ENCODE measurements at regions of chr1 and their contacts with region 1.

Region 1: GRCh38 chr1:115595279-115596079 is 46.3 kb upstream of the VANGL1 start:
- DNase-seq: peak; percentile 43 to 71
- ATAC-seq: peak; percentile 92 to 98
- H3K4me3 ChIP-seq: no peak overlapping the region
- H3K27ac ChIP-seq: peak overlapping the region in 1 of 2 experiments; percentile 67; a peak in 3 of 6 replicates
- H3K4me1 ChIP-seq: no peaks in the 10 kb centered on the region
- CTCF ChIP-seq: peak; percentile 79
- EP300 ChIP-seq: no peak
- POLR2A ChIP-seq: no peak
- RAD21 ChIP-seq: peak; percentile 90 to 95

Region 2: GRCh38 chr1:115112496-115113375 is 482.7 kb before region 1 on chr1:
- CTCF ChIA-PET with region 1: interaction called, 12 read pairs
- POLR2A ChIA-PET with region 1: no interaction called
- DNase-seq: no peak
- ATAC-seq: peak; percentile 13 to 68; a peak in 3 of 6 replicates
- H3K4me3 ChIP-seq: no peak overlapping the region
- H3K27ac ChIP-seq: no peak overlapping the region
- H3K4me1 ChIP-seq: 0 out of 3 replicates have a peak, but pooled peaks cover 4% of the 10 kb centered on the region
- CTCF ChIP-seq: peak; percentile 69
- EP300 ChIP-seq: no peak
- POLR2A ChIP-seq: no peak
- RAD21 ChIP-seq: peak; percentile 68 to 70

Region 3: DNA sequence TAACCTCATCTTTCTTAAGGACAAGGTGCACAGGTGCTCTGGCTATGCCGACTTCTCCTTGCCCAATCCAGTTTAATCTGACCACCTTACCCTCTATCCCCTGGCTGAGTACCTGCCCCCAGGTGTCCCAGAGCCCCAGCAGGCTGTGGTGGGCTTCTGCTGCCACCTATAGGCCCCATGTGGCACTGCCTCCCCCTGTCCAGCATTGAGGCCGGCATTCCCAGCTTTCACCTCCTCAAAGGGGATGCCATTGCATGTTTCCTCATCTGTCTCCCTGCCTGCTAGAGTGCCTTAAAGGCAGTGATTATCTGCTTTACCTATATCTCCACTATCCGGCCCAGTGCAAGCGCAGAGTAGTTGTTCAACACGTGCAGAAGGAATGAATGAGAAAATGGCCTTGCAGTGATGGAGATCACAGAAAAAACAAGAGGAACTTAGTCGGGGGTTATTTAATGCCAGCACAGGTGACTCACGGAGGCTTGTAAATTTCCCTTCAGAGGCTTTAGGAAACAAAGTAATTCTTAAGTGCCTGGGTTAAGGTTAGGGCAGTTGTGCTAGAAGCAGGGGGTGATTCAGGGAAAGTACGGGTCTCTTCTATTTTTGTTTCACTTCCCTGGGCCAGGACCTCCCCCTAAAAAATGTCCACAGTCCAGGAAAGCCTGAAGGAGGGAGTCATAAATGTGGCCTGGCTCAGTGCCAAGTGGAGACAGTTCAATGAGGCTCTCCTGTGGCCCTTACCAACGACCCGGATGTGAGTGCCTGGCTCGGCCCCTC is 125.6 kb before region 1 on chr1:
- CTCF ChIA-PET with region 1: interaction called, 12 read pairs
- POLR2A ChIA-PET with region 1: no interaction called
- DNase-seq: peak; percentile 41 to 43
- ATAC-seq: peak; percentile 75 to 90
- H3K4me3 ChIP-seq: no peak overlapping the region
- H3K27ac ChIP-seq: peak overlapping the region; percentile 33 to 72; a peak in 2 of 6 replicates
- H3K4me1 ChIP-seq: peaks cover 8% of the 10 kb centered on the region
- CTCF ChIP-seq: peak; percentile 69
- EP300 ChIP-seq: no peak
- POLR2A ChIP-seq: no peak
- RAD21 ChIP-seq: peak; percentile 88 to 89

Region 4: GRCh38 chr1:115546846-115547245 is 48.6 kb before region 1 on chr1:
- CTCF ChIA-PET with region 1: interaction called, 17 read pairs
- POLR2A ChIA-PET with region 1: no interaction called
- DNase-seq: no peak
- ATAC-seq: no peak
- H3K4me3 ChIP-seq: no peak overlapping the region
- H3K27ac ChIP-seq: peak overlapping the region in 1 of 2 experiments; percentile 83; a peak in 3 of 6 replicates
- H3K4me1 ChIP-seq: peaks cover 19% of the 10 kb centered on the region
- CTCF ChIP-seq: no peak
- EP300 ChIP-seq: no peak
- POLR2A ChIP-seq: no peak
- RAD21 ChIP-seq: no peak

Region 5: DNA sequence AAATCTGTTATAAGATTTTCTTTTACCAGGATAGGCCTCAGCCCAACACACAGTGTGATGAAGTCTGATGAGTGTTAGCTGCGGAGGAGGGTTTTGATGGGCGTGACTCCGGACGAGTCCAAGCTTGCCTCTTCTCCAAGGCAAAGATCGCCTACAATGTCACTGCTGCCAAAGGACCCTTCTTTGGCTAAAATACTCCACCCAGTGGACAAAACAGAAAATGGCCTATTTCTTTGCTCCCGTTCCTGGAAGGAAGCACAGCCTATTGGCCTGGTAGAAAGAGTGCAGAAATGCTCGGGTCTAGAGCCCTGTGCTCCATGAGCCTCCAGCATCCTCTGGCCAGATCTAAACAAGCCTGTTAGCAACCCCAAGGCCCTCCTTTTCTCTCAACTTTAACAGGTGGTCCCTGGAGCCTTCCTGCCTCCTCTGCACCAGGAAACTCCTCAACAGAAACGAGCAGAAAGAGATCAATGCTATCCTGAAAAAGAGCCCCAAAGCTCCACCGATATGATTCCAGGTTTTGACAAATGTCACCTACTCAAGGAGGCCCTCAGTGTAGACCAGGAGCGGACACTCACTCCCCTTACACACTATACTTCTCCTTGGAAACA is 176.5 kb after region 1 on chr1:
- CTCF ChIA-PET with region 1: interaction called, 10 read pairs
- POLR2A ChIA-PET with region 1: no interaction called
- DNase-seq: peak; percentile 38 to 75
- ATAC-seq: peak; percentile 99
- H3K4me3 ChIP-seq: 0 out of 3 replicates have a peak overlapping the region, but pooled peaks have one; percentile 27
- H3K27ac ChIP-seq: peak overlapping the region; percentile 59 to 79; a peak in 5 of 6 replicates
- H3K4me1 ChIP-seq: peaks cover 4% of the 10 kb centered on the region; the same call in 1 of the 3 replicates
- CTCF ChIP-seq: peak; percentile 59
- EP300 ChIP-seq: no peak
- POLR2A ChIP-seq: no peak
- RAD21 ChIP-seq: peak; percentile 75 to 79